ENCODE measurements at regions of chr6 and their contacts with region 1.

Region 1: DNA sequence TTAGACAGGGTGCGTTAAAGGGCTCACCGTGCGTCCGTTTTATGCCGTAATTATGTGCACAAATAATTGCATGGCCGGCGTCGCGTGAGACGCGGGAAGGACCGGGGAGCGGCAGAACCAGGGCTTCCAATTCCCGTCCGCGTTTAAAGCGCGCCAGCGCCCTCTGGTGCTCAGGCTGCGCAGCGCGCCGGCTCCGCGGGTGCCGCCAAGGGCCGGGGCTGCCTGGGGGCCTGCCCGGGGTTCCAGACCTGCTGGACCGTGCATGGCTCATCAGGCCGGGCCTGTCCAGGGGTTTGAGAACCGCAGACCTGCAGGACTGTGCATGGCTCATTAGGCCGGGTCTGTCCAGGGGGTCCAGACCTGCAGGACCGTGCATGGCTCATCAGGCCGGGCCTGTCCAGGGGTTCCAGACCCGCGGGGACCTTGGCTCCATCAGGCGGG is 369.0 kb downstream of the THBS2 start:
- DNase-seq: peak; percentile 77
- ATAC-seq: peak; percentile 98
- H3K4me3 Mint-ChIP-seq: peak overlapping the region; percentile 68
- H3K27ac Mint-ChIP-seq: peak overlapping the region; percentile 59
- H3K4me1 Mint-ChIP-seq: peaks cover 9% of the 10 kb centered on the region
- H3K27me3 Mint-ChIP-seq: peaks cover 5% of the 10 kb centered on the region
- CTCF ChIP-seq: peak; percentile 94

Region 2: GRCh38 chr6:168370310-168370991 is 514.2 kb before region 1 on chr6:
- CTCF ChIA-PET with region 1: interaction called, 11 read pairs
- POLR2A ChIA-PET with region 1: no interaction called
- intact Hi-C with region 1: loop called (anchors 2 kb)
- DNase-seq: peak; percentile 75
- ATAC-seq: peak; percentile 72
- H3K4me3 Mint-ChIP-seq: no peak overlapping the region
- H3K27ac Mint-ChIP-seq: no peak overlapping the region
- H3K4me1 Mint-ChIP-seq: peaks cover 4% of the 10 kb centered on the region
- H3K27me3 Mint-ChIP-seq: peaks cover 7% of the 10 kb centered on the region
- CTCF ChIP-seq: peak; percentile 73

Region 3: DNA sequence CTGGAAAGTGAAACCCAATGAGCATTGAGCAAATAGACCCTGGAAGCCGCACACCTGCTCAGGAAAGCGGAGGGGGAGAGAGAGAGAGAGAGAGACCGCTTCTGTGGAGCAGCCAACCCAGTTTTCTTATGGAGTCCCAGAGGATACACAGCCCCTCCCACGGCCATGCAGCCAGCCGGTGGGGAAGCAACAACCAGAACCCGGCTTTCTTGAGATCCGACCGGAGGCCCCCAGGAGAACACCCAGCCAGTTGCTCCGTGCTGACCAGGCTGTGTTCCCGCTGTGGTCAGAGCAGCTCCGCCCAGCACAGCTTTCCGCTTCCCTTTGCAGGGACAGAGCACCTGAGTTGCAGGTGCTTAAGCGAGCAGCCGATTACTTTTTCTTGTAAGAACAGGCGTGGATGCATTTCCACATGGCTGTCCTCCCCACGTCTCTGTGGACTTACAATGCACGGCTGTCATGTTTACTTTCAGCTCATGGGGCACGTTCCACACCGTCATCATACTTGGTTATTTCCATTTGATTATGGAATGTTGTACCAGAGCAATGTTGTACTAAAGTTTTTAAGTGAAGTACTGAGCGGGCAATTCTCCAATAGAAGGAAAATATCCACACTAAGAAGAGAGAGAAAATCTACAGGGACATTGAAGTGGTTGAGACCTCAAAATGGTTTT is 12.9 kb before region 1 on chr6:
- CTCF ChIA-PET with region 1: no interaction called
- POLR2A ChIA-PET with region 1: no interaction called
- intact Hi-C with region 1: no loop called
- DNase-seq: no peak
- ATAC-seq: no peak
- H3K4me3 Mint-ChIP-seq: no peak overlapping the region
- H3K27ac Mint-ChIP-seq: no peak overlapping the region
- H3K4me1 Mint-ChIP-seq: no peaks in the 10 kb centered on the region
- H3K27me3 Mint-ChIP-seq: peaks cover 3% of the 10 kb centered on the region
- CTCF ChIP-seq: no peak

Region 4: GRCh38 chr6:168903613-168904345 is 19.1 kb after region 1 on chr6:
- CTCF ChIA-PET with region 1: no interaction called
- POLR2A ChIA-PET with region 1: no interaction called
- intact Hi-C with region 1: no loop called
- DNase-seq: no peak
- ATAC-seq: no peak
- H3K4me3 Mint-ChIP-seq: no peak overlapping the region
- H3K27ac Mint-ChIP-seq: no peak overlapping the region
- H3K4me1 Mint-ChIP-seq: peaks cover 5% of the 10 kb centered on the region
- H3K27me3 Mint-ChIP-seq: peaks cover 2% of the 10 kb centered on the region
- CTCF ChIP-seq: no peak

Region 5: DNA sequence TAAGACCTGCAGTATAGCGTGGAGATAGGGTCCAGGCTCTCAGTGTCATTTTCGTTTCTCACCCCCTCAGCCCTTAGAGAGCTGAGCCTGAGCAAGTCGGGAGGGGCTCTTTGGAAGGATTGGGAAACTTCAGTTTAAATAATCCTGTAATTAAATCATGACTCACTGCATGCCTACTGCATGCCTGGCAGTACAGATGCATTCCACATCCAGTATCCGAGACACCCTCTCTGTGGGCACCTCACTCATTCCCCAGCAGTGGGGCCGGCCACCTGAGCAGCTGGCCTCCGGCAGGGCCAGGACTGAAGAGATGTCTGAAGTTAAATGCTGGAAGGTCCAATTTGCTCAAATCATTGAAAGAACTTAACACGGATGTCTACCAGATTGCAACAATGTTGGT is 52.4 kb after region 1 on chr6:
- CTCF ChIA-PET with region 1: no interaction called
- POLR2A ChIA-PET with region 1: no interaction called
- intact Hi-C with region 1: no loop called
- DNase-seq: no peak
- ATAC-seq: no peak
- H3K4me3 Mint-ChIP-seq: no peak overlapping the region
- H3K27ac Mint-ChIP-seq: no peak overlapping the region
- H3K4me1 Mint-ChIP-seq: no peaks in the 10 kb centered on the region
- H3K27me3 Mint-ChIP-seq: peaks cover 18% of the 10 kb centered on the region
- CTCF ChIP-seq: no peak